Activated CD4-positive, alpha-beta memory T cell treated with anti-CD3 and anti-CD28 coated beads for 36 hours (primary cell): ENCODE measurements at regions of chr12 and their contacts with region 1.

Region 1: DNA sequence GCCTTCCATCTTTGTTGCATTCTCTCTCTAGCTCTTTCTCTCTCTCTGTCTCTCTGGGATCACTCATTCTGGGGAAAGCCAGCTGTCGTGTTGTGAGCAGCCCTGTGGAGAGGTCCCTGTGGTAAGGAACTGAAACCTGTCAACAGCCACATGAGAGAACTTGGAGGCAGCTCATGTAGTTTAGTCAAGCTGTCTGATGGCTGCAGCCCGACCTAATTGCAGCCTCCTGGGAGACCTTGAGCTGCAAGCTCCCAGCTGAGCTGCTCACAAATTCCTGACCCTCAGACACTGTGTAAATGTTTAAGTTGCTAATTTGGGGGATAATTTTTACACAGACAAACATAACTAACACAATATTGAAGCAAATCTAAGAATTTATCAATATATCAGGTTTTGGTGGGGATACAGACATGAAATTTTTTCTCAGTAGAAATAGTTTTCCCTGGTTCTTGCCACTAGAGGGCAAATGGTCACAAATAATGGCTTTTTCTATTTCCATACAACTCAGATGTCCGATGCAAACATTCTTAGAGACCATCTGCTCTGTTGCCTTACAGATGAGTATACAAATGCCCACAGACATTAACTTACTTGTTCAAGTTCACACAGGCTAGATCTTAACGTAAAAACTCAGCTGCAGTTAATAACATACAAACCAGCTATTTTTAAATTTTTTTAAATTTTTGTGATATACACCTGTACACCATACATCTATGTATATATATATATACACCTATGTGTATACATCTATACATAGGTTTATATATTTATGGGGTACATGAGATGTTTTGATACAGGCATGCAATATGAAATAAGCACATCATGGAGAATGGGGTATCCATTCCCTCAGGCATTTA is 15.5 kb upstream of the KRR1 start:
- DNase-seq: peak; percentile 21
- H3K4me3 Mint-ChIP-seq: no peak overlapping the region
- H3K27ac Mint-ChIP-seq: no peak overlapping the region
- H3K4me1 Mint-ChIP-seq: peaks cover 6% of the 10 kb centered on the region
- H3K27me3 Mint-ChIP-seq: peaks cover 19% of the 10 kb centered on the region

Region 2: GRCh38 chr12:75814851-75815754 is 288.2 kb after region 1 on chr12:
- CTCF ChIA-PET with region 1: interaction called, 4 read pairs
- POLR2A ChIA-PET with region 1: interaction called, 3 read pairs
- intact Hi-C with region 1: loop called (anchors 2 kb)
- DNase-seq: no peak
- H3K4me3 Mint-ChIP-seq: no peak overlapping the region
- H3K27ac Mint-ChIP-seq: no peak overlapping the region
- H3K4me1 Mint-ChIP-seq: peaks cover 22% of the 10 kb centered on the region
- H3K27me3 Mint-ChIP-seq: no peaks in the 10 kb centered on the region

Region 3: DNA sequence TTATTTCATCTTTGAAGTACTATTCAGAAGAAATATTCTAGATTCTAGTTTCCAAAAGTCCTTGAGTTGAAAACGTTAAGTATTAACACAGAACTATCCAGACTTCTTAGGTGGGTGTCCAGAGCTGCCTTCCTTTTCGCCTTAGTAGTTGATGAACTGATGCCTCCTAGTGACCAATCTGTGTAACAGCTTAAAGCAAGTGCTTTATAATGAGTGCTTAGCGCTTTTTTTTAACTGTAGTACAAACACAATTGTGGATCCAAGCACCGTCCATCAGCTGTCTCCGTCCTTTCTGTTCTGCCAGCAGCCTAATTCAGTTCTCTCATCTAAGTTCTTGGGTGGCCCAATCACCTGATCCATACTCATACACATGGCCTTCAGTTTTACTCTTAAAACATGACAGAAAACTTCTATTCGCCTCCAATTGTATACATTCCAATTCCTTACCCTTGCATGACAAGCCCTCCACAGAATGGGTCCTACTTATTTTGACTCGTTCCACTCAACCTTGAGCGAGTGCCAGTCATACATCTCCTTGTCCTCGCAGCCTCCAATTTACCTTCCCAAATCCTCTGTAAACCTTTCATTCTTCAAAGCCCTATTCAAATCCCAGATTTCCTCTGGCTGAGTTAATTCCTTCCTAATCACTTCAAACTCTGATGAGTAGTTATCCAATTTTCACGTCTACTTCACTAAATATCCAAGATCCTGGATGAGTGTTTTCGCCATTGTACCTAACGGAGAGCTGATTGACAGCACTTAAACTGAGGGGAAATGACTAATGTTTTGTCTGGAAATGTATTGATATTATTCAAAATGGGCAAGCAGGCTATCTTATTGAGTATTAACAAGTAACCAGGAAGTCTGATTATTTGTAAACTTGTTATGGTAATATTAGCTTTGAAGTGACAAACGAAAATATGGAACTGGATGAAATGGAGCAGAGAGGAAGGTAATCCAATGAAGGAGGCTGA is 510.5 kb after region 1 on chr12:
- CTCF ChIA-PET with region 1: interaction called, 67 read pairs
- POLR2A ChIA-PET with region 1: interaction called, 4 read pairs
- intact Hi-C with region 1: loop called (anchors 1 kb)
- DNase-seq: no peak
- H3K4me3 Mint-ChIP-seq: no peak overlapping the region
- H3K27ac Mint-ChIP-seq: no peak overlapping the region
- H3K4me1 Mint-ChIP-seq: peaks cover 19% of the 10 kb centered on the region
- H3K27me3 Mint-ChIP-seq: no peaks in the 10 kb centered on the region

Region 4: DNA sequence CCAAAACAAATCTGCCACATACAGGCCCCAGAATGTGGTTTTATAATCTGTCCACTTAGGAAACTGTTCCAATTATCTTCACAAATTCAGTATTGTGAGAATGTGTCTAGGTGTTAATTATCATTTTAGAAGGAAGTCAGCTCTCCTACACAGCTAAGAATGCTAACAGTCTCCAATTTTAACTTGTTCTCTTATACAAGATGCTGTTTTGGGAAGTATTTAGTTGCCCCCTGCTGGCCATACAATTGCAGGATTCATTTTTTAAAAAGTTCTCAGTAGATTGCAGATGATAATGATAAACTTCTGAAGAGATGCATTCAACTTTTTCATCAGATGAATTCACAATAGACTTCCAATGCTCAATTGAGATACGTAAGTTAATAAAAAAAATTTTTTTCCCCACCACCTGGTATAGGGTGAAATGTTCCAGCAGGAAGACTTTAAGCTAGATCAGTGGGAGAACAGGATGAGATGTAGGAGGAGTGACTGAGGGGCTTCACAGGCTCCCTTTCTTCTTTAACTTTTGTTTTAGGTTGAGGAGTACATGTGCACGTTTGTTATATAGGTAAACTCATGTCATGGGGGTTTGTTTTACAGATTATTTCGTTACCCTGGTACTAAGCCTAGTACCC is 1060.0 kb after region 1 on chr12:
- CTCF ChIA-PET with region 1: interaction called, 4 read pairs
- POLR2A ChIA-PET with region 1: no interaction called
- intact Hi-C with region 1: loop called (anchors 5 kb)
- DNase-seq: peak; percentile 18
- H3K4me3 Mint-ChIP-seq: no peak overlapping the region
- H3K27ac Mint-ChIP-seq: no peak overlapping the region
- H3K4me1 Mint-ChIP-seq: peaks cover 1% of the 10 kb centered on the region
- H3K27me3 Mint-ChIP-seq: no peaks in the 10 kb centered on the region